Left cardiac atrium (tissue), 4 donors: ENCODE measurements at regions of chr2 and their contacts with region 1.

Region 1: GRCh38 chr2:71798266-71799012 is 345.1 kb downstream of the DYSF start:
- DNase-seq: peak; percentile 43
- ATAC-seq: peak in 1 of 2 donors; percentile 49

Region 2: DNA sequence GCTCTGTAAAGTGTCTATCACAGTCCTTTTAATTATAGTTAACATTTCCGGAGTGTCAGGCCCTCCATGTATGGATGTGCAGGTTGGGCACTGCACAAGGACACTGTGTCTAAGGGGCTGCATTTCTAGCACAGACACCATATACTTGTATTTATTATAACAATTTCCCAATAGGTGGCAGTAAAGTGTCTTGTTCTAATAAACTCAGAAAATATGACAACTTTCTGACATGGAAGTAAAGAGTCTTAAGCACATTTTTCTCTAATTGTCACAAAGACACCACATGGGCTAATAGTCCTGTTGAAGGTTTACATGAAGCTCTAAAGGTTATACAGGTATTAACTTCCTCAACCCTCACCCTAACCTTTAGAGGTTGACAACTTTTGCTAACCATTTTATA is 188.5 kb before region 1 on chr2:
- intact Hi-C with region 1: loop called (anchors 5 to 10 kb)
- DNase-seq: no peak
- ATAC-seq: peak in 1 of 2 donors; percentile 17

Region 3: GRCh38 chr2:71685078-71685848 is 113.2 kb before region 1 on chr2:
- intact Hi-C with region 1: loop called in 1 of 2 experiments (anchors 10 kb)
- DNase-seq: no peak
- ATAC-seq: peak; percentile 22 to 61

Region 4: DNA sequence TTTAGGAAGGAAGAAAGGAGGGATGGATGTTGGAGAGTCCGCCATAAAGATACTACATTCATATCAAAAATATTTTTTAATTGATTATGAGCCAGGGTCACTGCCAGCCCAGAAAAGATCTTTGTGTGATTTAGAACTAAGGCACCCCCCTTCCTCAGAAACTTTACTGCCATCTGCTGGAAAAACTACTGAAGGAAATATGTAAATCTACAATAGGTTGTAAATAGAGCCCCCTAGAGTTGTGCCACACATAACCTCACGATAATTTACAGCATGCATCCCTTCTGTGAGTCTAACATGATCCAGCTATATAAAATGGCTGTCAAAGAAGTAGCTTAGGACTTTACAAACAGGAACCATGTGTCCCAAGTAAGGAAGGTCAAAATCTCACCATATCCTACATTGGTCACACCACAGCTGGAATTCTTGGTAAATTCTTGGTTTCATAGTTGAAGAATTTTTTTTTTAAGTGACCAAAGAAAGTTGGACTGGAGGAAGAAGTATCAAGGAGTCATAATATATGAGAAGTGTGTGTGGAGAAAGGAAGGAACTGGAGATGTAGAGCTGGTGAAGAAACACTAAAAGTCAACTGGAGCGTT is 196.7 kb after region 1 on chr2:
- intact Hi-C with region 1: loop called in 1 of 2 experiments (anchors 10 kb)
- DNase-seq: no peak
- ATAC-seq: no peak